AG04449 (cell line): ENCODE measurements at regions of chr6 and their contacts with region 1.

Region 1: DNA sequence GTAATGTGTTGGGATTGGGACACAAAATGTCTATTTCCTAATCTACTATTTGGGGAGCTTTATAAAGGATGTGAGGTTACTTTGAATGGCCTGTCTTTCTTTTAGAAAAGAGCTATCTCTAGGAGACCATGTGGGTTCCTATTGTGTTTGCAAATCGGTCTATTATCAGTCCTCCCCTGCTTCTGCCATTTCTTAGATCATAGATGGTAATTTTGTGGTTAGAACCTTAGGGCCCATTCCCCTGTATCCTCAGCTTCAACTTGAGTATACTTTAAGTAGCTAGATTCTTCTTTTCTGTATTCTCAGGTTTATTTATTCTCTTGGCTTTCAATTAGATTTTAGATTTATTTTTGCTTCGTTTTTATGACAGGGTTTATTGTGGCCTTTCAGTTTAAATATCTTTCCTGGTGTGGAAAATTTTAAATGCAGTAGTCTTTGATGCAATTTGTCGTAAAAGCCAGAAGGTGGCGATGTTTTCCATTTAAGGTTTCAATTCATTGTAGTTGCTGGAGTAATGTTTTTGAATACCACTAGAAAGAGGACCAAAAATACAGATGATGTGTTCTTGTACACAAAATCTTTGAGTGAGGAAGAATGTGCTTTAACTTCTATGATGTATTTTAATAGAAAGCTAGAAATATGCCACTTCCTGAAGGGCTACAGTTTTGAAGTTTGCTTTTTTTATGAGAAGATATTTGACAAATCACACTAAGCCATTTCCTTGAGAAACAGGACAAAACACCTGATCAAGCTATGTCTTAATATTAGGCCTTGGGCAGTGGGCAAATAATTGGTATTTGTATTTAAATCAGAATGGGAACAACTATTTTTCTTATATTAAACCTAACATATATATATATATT is 20.3 kb downstream of the TBPL1 start:
- DNase-seq: no peak
- H3K4me3 ChIP-seq: no peak overlapping the region
- CTCF ChIP-seq: no peak

Region 2: DNA sequence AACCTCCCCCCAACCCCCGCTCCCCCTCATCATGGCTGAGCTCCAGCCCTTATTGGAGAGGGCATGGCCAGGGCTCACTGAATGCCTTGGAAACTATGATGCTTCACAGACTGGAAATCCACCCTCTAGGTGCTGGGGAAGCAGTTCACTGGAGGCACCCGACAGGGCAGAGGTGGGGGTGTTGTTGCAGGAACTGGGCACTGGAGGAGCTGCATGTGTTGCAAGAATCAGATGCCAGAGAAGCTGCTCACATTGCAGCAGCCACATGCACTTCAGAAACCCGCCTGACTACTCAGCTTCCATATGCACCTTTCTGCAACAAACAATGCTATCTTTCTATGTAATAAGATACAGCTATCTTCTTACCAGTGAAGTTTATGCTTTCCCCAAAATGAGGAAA is 28.2 kb before region 1 on chr6:
- CTCF ChIA-PET with region 1: interaction called, 17 read pairs
- POLR2A ChIA-PET with region 1: no interaction called
- DNase-seq: no peak
- H3K4me3 ChIP-seq: no peak overlapping the region
- CTCF ChIP-seq: no peak

Region 3: DNA sequence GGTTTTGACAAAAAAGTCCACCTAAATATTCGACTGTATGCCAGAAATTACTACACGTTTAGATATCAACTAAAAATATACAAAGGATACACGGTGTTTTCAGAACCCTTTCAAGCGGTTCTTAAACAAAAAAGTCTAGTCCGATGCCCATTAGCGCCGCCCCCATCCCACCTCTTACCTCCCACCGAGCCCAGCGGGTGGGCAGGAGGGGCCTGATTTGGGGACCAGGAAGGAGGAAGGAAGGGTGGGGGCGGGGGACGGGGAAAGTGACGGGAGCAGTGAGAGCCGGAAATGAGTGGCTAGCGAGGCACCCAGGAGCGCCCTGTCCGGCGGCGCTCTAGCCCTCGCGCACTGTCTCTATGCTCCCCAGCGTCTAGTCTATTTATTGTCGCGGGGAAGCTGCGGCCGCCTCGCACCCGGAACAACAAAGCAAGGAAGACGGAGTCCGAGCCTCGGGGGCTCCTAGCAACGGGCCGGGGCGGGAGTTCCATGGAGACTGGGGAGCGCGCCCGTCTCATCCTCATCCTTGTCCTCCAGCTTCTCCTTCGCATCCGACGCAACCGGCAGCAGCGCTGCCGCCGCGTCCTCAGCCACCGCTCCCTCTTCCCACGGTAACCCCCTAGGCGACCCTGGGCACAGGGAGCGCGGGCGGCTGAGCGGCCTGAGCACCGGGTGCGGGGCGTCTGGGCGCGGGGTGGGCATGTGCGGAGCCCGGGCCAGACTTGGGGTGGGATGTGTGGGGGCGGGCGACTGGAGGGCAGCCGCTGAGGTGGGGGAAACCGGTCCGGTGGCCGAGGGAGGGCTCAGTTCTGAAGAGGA is 20.3 kb before region 1 on chr6 and contains the start of gene TBPL1:
- CTCF ChIA-PET with region 1: interaction called, 32 read pairs
- POLR2A ChIA-PET with region 1: no interaction called
- DNase-seq: peak; percentile 69
- H3K4me3 ChIP-seq: peak within 1 kb of the TSS; percentile 82
- CTCF ChIP-seq: no peak

Region 4: GRCh38 chr6:133959667-133960368 is 13.5 kb before region 1 on chr6:
- CTCF ChIA-PET with region 1: interaction called, 32 read pairs
- POLR2A ChIA-PET with region 1: no interaction called
- DNase-seq: no peak
- H3K4me3 ChIP-seq: no peak overlapping the region
- CTCF ChIP-seq: no peak

Region 5: DNA sequence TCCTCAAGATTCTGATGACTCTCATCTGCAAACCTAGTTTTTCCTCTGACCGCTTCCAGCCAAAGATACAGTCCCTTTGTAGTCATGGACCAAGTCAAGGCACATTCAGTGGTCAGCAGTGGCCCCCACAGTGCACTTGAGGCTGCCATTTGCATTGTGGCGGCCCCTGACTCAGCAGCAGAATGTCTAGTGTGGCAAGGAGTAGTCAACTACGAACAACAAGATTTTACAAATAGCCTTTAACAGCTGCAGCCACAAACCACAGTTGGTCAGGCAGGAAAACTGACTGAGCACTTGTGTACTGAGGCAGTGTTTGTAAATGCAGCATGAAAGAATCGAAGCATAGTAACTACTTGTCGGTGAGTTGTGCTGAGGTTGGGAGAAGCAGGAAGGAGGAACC is 29.5 kb after region 1 on chr6:
- CTCF ChIA-PET with region 1: interaction called, 13 read pairs
- POLR2A ChIA-PET with region 1: no interaction called
- DNase-seq: no peak
- H3K4me3 ChIP-seq: no peak overlapping the region
- CTCF ChIP-seq: no peak

Region 6: DNA sequence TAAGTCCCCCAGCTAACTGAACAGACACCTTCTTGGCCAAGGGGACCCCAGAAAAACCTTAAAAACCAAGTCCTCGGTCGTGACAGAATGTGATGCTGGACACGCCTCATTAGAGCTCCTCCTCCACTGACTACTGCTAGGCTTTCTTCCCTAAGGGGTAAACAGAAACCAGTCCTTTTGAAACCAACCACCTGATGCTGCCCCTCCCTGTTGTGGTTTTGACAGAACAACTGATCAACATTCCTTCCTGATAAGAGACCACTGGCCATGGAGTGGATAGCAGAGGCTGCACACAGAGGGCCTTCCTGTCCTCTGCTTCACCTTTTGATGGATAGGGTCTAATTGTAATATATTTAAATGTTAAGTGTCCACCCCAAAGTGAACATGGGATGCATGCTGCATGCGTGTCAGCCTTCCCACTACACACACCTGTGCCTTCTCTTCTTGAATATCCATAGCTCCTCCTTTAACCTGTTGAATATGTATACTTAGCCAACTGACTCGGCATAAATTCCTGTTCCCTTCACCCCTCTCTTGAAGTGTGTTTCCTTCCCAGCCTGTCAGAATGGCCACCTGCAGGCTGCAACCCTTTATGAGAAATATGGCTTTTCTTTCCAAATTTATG is 106.9 kb after region 1 on chr6:
- CTCF ChIA-PET with region 1: interaction called, 19 read pairs
- POLR2A ChIA-PET with region 1: no interaction called
- DNase-seq: no peak
- H3K4me3 ChIP-seq: no peak overlapping the region
- CTCF ChIP-seq: no peak

Region 7: DNA sequence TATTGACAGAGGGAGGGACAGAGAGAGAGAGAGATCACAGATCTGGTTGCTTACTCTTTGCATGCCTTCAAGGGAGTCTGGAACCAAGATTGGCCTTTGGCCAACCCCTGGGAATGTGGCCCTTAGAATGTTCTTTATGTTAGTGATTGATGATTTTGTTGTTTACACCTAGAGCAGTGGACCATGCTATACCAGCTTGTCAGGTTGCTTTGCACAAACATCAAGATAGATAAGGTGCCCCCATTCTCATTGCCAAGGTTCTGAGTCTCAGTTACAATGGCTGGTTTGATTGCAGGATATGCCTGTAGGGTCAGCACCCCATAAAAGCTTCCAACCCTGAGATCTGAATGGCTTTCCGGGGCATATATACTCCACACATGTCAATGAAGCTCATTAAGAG is 132.6 kb after region 1 on chr6:
- CTCF ChIA-PET with region 1: interaction called, 30 read pairs
- POLR2A ChIA-PET with region 1: no interaction called
- DNase-seq: no peak
- H3K4me3 ChIP-seq: no peak overlapping the region
- CTCF ChIP-seq: no peak